GM10248 (cell line): ENCODE measurements at regions of chr17 and their contacts with region 1.

Region 1: DNA sequence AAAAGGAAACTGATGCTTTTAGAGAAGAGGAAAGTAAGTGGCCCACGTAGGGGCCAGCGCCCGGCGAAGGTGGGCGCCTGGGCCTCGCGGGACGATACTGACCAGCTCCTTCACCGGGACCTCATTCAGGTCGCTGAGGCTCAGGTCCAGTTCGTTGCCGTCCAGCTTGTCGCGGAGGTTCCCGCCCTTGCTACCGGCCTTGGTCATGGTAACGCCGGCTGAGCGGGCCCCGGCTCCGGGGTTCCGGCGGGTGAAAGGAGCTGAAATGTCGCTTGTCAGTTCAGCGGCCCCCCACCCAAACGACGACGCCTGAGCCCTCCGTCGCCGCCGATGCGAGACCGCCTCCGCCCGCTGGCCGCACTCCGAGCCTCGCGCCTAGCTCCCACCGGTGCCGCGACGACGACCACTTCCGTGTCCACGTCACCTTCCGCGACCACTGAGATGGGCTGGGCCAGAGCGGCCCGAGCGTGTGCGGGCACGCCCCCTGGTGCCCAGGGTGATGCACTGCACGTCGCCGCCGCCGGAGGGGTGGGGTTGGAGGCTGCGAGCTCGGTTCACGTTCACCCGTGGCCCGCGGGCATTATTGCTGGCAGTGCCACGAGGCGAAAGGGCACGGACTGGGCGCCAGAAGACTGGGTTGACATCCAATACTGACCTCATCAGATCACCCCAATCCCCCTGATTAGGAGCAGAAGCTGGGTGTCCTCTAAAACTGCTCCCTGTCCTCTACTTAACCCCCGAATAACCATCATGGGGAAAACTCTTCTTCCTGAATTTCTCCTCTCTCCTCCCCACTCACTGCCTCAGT is at the start of gene LRRC59:
- DNase-seq: peak; percentile 94
- CTCF ChIP-seq: peak; percentile 100

Region 2: GRCh38 chr17:49779739-49780231 is 617.5 kb before region 1 on chr17:
- CTCF ChIA-PET with region 1: no interaction called
- POLR2A ChIA-PET with region 1: no interaction called
- DNase-seq: peak; percentile 34
- CTCF ChIP-seq: peak; percentile 49

Region 3: GRCh38 chr17:50234581-50234980 is 162.7 kb before region 1 on chr17:
- CTCF ChIA-PET with region 1: no interaction called
- POLR2A ChIA-PET with region 1: no interaction called
- DNase-seq: no peak
- CTCF ChIP-seq: no peak

Region 4: GRCh38 chr17:50352072-50352692 is 45.1 kb before region 1 on chr17:
- CTCF ChIA-PET with region 1: interaction called, 20 read pairs
- POLR2A ChIA-PET with region 1: no interaction called
- DNase-seq: no peak
- CTCF ChIP-seq: no peak

Region 5: DNA sequence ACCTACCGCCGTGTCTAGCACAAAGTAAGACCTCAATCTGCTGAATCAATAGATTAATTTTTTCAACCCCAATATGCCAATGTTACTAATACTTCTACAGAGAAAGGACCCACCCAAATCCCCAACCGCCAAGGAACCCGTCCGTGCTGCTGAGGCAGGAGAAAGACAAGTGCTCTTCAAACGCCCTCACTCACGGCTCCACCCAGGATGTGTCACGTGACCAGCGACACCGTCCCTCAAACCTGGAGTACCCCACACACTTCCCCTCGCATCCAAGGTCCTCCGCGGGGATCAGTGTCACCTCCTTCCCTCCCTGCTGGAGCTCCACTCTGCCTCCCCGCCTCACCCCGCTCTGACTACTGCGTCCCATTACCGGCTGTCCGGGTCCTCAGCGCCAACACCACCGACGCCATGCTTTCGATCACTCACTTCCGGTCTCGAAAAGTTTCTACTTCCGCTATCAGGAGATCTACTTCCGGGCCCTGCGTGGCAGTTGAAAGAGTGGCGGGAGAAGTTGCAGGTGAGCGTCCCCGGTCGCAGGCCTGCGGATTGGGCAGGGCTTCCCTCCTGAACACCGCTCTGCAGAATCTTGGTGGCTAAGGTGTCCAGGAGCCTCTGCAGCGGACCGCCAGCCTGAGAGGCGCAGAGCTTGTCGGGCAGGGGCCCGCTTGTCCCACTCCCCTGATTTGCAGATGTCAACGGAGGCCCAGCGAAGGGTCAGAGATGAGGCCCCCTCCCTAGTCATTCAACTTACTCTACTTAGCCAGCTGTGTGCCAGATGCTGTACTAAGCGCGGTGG is 24.4 kb before region 1 on chr17 and contains the starts of genes EME1 and MRPL27:
- CTCF ChIA-PET with region 1: interaction called, 43 read pairs
- POLR2A ChIA-PET with region 1: no interaction called
- DNase-seq: peak; percentile 92
- CTCF ChIP-seq: no peak

Region 6: GRCh38 chr17:50386510-50386909 is 10.8 kb before region 1 on chr17:
- CTCF ChIA-PET with region 1: interaction called, 57 read pairs
- POLR2A ChIA-PET with region 1: interaction called, 5 read pairs
- DNase-seq: no peak
- CTCF ChIP-seq: no peak

Region 7: GRCh38 chr17:50425682-50426471 is 28.6 kb after region 1 on chr17 and contains the start of gene ACSF2:
- CTCF ChIA-PET with region 1: interaction called, 35 read pairs
- POLR2A ChIA-PET with region 1: interaction called, 6 read pairs
- DNase-seq: peak; percentile 90
- CTCF ChIP-seq: no peak

Region 8: GRCh38 chr17:50440172-50440837 is 43.0 kb after region 1 on chr17:
- CTCF ChIA-PET with region 1: interaction called, 11 read pairs
- POLR2A ChIA-PET with region 1: no interaction called
- DNase-seq: no peak
- CTCF ChIP-seq: no peak

Region 9: GRCh38 chr17:50596191-50597037 is 199.1 kb after region 1 on chr17:
- CTCF ChIA-PET with region 1: no interaction called
- POLR2A ChIA-PET with region 1: no interaction called
- DNase-seq: no peak
- CTCF ChIP-seq: peak; percentile 7